A549 (cell line): ENCODE measurements at regions of chr7 and their contacts with region 1.

Region 1: GRCh38 chr7:26667500-26668133 is 196.8 kb downstream of the SKAP2 start:
- DNase-seq: peak; percentile 47 to 94
- ATAC-seq: peak; percentile 99 to 100
- H3K4me3 ChIP-seq: no peak overlapping the region
- H3K27ac ChIP-seq: no peak overlapping the region
- H3K4me1 ChIP-seq: 0 out of 3 replicates have a peak, but pooled peaks cover 4% of the 10 kb centered on the region
- CTCF ChIP-seq: peak; percentile 98
- EP300 ChIP-seq: no peak
- POLR2A ChIP-seq: no peak
- RAD21 ChIP-seq: peak; percentile 90 to 97

Region 2: GRCh38 chr7:26376175-26376917 is 291.3 kb before region 1 on chr7:
- CTCF ChIA-PET with region 1: interaction called, 228 read pairs
- POLR2A ChIA-PET with region 1: no interaction called
- DNase-seq: peak; percentile 25 to 52
- ATAC-seq: peak; percentile 90 to 91
- H3K4me3 ChIP-seq: peak overlapping the region; percentile 59
- H3K27ac ChIP-seq: peak overlapping the region; percentile 46 to 81
- H3K4me1 ChIP-seq: no peaks in the 10 kb centered on the region
- CTCF ChIP-seq: no peak
- EP300 ChIP-seq: no peak
- POLR2A ChIP-seq: no peak
- RAD21 ChIP-seq: no peak

Region 3: DNA sequence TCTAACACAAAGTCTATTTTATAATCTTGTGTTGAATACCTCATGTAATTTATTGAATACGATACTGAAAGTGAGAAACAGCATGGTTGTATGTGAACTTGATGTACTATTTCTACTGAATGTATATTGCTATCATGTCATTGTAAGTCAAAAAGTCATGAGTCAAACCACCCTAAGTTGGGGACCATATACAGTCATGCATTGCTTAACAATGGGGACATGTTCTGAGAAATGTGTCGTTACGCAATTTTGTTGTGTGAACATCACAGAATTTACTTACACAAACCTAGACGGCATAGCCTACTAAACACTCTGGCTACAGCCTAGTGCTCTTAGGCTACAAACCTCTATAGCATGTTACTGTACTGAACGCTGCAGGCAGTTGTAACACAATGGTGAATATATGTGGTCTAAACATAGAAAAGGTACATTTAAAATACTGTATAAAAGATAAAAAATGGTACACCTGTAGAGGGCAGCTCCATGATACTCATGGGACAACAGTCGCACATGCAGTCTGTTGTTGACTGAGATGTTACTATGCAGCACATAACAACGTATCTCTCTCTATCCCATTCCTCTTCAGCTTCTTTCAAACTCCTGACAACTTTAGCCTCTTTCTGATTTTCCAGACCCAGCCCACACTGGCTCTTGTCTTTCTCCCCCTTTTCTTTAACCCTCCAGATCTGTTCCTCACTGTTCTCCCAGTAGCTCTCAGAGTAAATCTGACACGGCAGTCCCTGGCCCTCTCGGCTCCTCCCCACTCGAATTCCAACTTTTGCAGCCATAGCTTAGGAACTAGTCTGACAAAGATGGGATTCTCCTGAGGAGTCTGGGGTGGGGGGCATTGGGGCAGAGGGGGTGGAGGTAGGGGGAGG is 285.9 kb before region 1 on chr7:
- CTCF ChIA-PET with region 1: interaction called, 49 read pairs
- POLR2A ChIA-PET with region 1: no interaction called
- DNase-seq: no peak
- ATAC-seq: no peak
- H3K4me3 ChIP-seq: no peak overlapping the region
- H3K27ac ChIP-seq: no peak overlapping the region
- H3K4me1 ChIP-seq: no peaks in the 10 kb centered on the region
- CTCF ChIP-seq: no peak
- EP300 ChIP-seq: no peak
- POLR2A ChIP-seq: no peak
- RAD21 ChIP-seq: no peak

Region 4: GRCh38 chr7:26500749-26501352 is 166.8 kb before region 1 on chr7:
- CTCF ChIA-PET with region 1: interaction called, 14 read pairs
- POLR2A ChIA-PET with region 1: no interaction called
- DNase-seq: peak; percentile 26 to 49
- ATAC-seq: peak; percentile 74 to 79; a peak in 4 of 6 replicates
- H3K4me3 ChIP-seq: no peak overlapping the region
- H3K27ac ChIP-seq: no peak overlapping the region
- H3K4me1 ChIP-seq: 0 out of 3 replicates have a peak, but pooled peaks cover 5% of the 10 kb centered on the region
- CTCF ChIP-seq: peak; percentile 69
- EP300 ChIP-seq: no peak
- POLR2A ChIP-seq: no peak
- RAD21 ChIP-seq: peak; percentile 68 to 69

Region 5: GRCh38 chr7:27150568-27151340 is 483.1 kb after region 1 on chr7:
- CTCF ChIA-PET with region 1: interaction called, 10 read pairs
- POLR2A ChIA-PET with region 1: no interaction called
- DNase-seq: peak; percentile 81 to 91
- ATAC-seq: peak; percentile 92 to 93
- H3K4me3 ChIP-seq: peak overlapping the region; percentile 49
- H3K27ac ChIP-seq: peak overlapping the region; percentile 88 to 90
- H3K4me1 ChIP-seq: peaks cover 16% of the 10 kb centered on the region
- CTCF ChIP-seq: peak; percentile 78
- EP300 ChIP-seq: no peak
- POLR2A ChIP-seq: peak; percentile 56
- RAD21 ChIP-seq: peak; percentile 31 to 55; a peak in 4 of 5 replicates